ENCODE measurements at regions of chr6 and their contacts with region 1.

Region 1: GRCh38 chr6:73461537-73462350 is at the start of gene MTO1:
- DNase-seq: peak; percentile 50 to 86 (median 81)
- ATAC-seq: peak; percentile 97
- H3K4me3 ChIP-seq: peak within 1 kb of the TSS; percentile 92
- H3K4me3 Mint-ChIP-seq: peak within 1 kb of the TSS; percentile 87 to 100 (median 98)
- H3K27ac ChIP-seq: peak within 1 kb of the TSS; percentile 93
- H3K27ac Mint-ChIP-seq: peak within 1 kb of the TSS; percentile 96 to 100 (median 98)
- H3K4me1 ChIP-seq: peaks cover 0 to 8% of the 10 kb centered on the region in 2 donors
- H3K4me1 Mint-ChIP-seq: peaks cover 11 to 53% (median 32%) of the 10 kb centered on the region in 7 donors
- H3K27me3 ChIP-seq: no peaks in the 10 kb centered on the region
- H3K27me3 Mint-ChIP-seq: no peaks in the 10 kb centered on the region
- total RNA-seq, gene MTO1: 43.5 to 92.0 (median 48.6) TPM

Region 2: DNA sequence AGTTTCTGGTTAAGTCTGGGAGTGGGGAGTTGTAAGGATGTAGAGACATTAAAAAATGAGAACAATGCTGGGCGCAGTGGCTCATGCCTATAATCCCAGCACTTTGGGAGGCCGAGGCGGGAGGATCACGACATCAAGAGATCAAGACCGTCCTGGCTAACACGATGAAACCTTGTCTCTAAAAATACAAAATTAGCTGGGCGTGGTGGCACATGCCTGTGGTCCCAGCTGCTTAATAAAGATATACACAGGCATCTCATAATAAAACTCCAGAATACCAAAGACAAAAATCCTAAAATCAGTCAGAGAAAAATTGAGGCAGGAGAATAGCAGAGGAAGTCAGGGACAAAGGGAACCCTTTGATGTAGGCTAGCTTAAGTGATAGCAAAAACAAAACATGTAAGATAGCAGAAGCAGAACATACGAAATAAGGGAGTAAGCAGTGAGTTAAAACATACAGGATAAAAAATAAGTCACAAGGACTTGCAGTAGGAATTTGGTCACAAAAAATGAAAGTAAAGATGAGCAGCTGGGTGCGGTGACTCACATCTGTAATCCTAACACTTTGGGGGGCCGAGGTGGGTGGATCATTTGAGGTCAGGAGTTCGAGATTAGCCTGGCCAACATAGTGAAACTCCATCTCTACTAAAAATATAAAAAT is 43.5 kb before region 1 on chr6:
- CTCF ChIA-PET with region 1: no interaction called
- POLR2A ChIA-PET with region 1: no interaction called
- intact Hi-C with region 1: loop called in 1 of 2 experiments (anchors 2 kb)
- DNase-seq: no peak
- ATAC-seq: no peak
- H3K4me3 ChIP-seq: no peak overlapping the region
- H3K4me3 Mint-ChIP-seq: no peak overlapping the region
- H3K27ac ChIP-seq: no peak overlapping the region
- H3K27ac Mint-ChIP-seq: peak overlapping the region in 3 of 9 donors; percentile 4 to 89 (median 55)
- H3K4me1 ChIP-seq: peaks cover 10 to 18% of the 10 kb centered on the region in 2 donors
- H3K4me1 Mint-ChIP-seq: peaks cover 4 to 24% (median 14%) of the 10 kb centered on the region in 7 donors
- H3K27me3 ChIP-seq: no peaks in the 10 kb centered on the region
- H3K27me3 Mint-ChIP-seq: no peaks in the 10 kb centered on the region

Region 3: GRCh38 chr6:73471686-73472290 is 10.0 kb after region 1 on chr6:
- CTCF ChIA-PET with region 1: interaction called, 3 read pairs
- POLR2A ChIA-PET with region 1: interaction called, 13 read pairs
- intact Hi-C with region 1: loop called in 1 of 2 experiments (anchors 1 kb)
- DNase-seq: no peak
- ATAC-seq: no peak
- H3K4me3 ChIP-seq: no peak overlapping the region
- H3K4me3 Mint-ChIP-seq: peak overlapping the region in 2 of 10 donors; percentile 13 to 68
- H3K27ac ChIP-seq: no peak overlapping the region
- H3K27ac Mint-ChIP-seq: peak overlapping the region in 5 of 9 donors; percentile 6 to 84 (median 52)
- H3K4me1 ChIP-seq: peaks cover 0 to 10% of the 10 kb centered on the region in 2 donors
- H3K4me1 Mint-ChIP-seq: peaks cover 0 to 22% (median 8%) of the 10 kb centered on the region in 7 donors
- H3K27me3 ChIP-seq: no peaks in the 10 kb centered on the region
- H3K27me3 Mint-ChIP-seq: no peaks in the 10 kb centered on the region

Region 4: DNA sequence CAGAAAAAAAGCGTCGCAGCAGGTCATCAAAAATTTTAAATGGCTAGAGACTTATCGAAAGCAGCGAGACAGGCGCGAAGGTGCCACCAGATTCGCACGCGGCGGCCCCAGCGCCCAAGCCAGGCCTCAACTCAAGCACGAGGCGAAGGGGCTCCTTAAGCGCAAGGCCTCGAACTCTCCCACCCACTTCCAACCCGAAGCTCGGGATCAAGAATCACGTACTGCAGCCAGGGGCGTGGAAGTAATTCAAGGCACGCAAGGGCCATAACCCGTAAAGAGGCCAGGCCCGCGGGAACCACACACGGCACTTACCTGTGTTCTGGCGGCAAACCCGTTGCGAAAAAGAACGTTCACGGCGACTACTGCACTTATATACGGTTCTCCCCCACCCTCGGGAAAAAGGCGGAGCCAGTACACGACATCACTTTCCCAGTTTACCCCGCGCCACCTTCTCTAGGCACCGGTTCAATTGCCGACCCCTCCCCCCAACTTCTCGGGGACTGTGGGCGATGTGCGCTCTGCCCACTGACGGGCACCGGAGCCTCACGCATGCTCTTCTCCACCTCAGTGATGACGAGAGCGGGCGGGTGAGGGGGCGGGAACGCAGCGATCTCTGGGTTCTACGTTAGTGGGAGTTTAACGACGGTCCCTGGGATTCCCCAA is 59.1 kb after region 1 on chr6 and contains the start of gene EEF1A1:
- CTCF ChIA-PET with region 1: interaction called, 5 read pairs
- POLR2A ChIA-PET with region 1: interaction called, 81 read pairs
- intact Hi-C with region 1: loop called (anchors 1 to 2 kb)
- DNase-seq: peak; percentile 91 to 100 (median 99)
- ATAC-seq: peak; percentile 90
- H3K4me3 ChIP-seq: peak within 1 kb of the TSS; percentile 98
- H3K4me3 Mint-ChIP-seq: peak within 1 kb of the TSS; percentile 89 to 99 (median 94)
- H3K27ac ChIP-seq: peak within 1 kb of the TSS; percentile 98
- H3K27ac Mint-ChIP-seq: peak within 1 kb of the TSS; percentile 94 to 99 (median 97)
- H3K4me1 ChIP-seq: peaks cover 42 to 47% of the 10 kb centered on the region in 2 donors
- H3K4me1 Mint-ChIP-seq: peaks cover 16 to 72% (median 58%) of the 10 kb centered on the region in 7 donors
- H3K27me3 ChIP-seq: no peaks in the 10 kb centered on the region
- H3K27me3 Mint-ChIP-seq: peaks cover 0 to 10% (median 0%) of the 10 kb centered on the region in 5 donors
- total RNA-seq, gene EEF1A1: 8,219 to 15,585 (median 15,428) TPM

Region 5: GRCh38 chr6:73610444-73611275 is 148.9 kb after region 1 on chr6:
- CTCF ChIA-PET with region 1: interaction called, 8 read pairs
- POLR2A ChIA-PET with region 1: no interaction called
- intact Hi-C with region 1: loop called in 1 of 2 experiments (anchors 2 kb)
- DNase-seq: peak in 7 of 9 donors; percentile 25 to 66 (median 58)
- ATAC-seq: peak; percentile 80
- H3K4me3 ChIP-seq: no peak overlapping the region
- H3K4me3 Mint-ChIP-seq: no peak overlapping the region
- H3K27ac ChIP-seq: no peak overlapping the region
- H3K27ac Mint-ChIP-seq: peak overlapping the region in 4 of 9 donors; percentile 12 to 56 (median 29)
- H3K4me1 ChIP-seq: no peaks in the 10 kb centered on the region
- H3K4me1 Mint-ChIP-seq: peaks cover 4 to 6% (median 5%) of the 10 kb centered on the region in 7 donors
- H3K27me3 ChIP-seq: no peaks in the 10 kb centered on the region
- H3K27me3 Mint-ChIP-seq: no peaks in the 10 kb centered on the region

Region 6: DNA sequence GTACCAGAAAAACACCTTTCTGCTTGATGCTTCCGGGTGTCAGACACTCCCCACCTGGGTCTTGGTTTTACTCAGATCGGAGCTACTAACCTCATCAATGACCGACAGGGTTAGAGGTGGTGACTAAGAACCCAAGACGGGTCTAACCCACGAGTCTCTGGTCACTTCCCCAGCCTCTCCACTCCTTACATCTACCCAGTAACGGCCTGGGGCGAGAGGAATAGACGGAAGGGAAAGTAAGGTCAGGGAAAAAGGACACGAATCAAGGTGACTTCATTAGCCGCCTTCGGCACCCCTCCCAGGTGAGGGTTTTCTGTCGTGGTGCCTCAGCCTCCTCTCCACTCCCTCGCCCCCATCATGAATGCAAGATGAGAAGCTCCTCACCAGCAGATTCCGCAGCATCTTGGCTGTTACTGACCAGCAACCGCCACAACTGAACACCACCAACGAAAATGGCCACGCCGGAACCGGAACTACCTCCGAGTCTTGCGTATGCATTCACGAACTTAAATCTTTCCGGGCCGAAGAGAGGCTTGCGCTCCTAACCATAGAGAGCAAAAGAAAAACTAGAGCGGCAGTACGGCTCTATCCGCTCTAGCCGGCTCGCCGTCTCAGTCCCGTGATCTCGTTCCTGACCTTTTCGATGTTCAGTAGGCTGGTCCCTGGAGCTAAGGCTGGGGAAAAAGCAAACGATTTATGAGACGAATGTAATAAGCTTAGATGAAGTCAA is 1781.8 kb after region 1 on chr6 and contains the start of gene COX7A2:
- CTCF ChIA-PET with region 1: no interaction called
- POLR2A ChIA-PET with region 1: interaction called, 3 read pairs
- intact Hi-C with region 1: loop called in 1 of 2 experiments (anchors 10 kb)
- DNase-seq: peak; percentile 66 to 91 (median 83)
- ATAC-seq: peak; percentile 98
- H3K4me3 ChIP-seq: peak within 1 kb of the TSS; percentile 84
- H3K4me3 Mint-ChIP-seq: peak within 1 kb of the TSS; percentile 88 to 99 (median 98)
- H3K27ac ChIP-seq: peak within 1 kb of the TSS; percentile 90
- H3K27ac Mint-ChIP-seq: peak within 1 kb of the TSS; percentile 94 to 100 (median 98)
- H3K4me1 ChIP-seq: peaks cover 10 to 11% of the 10 kb centered on the region in 2 donors
- H3K4me1 Mint-ChIP-seq: peaks cover 9 to 53% (median 33%) of the 10 kb centered on the region in 7 donors
- H3K27me3 ChIP-seq: no peaks in the 10 kb centered on the region
- H3K27me3 Mint-ChIP-seq: peaks cover 0 to 17% (median 15%) of the 10 kb centered on the region in 5 donors
- total RNA-seq, gene COX7A2: 159 to 395 (median 183) TPM